Mucosa of descending colon (tissue), 3 donors: ENCODE measurements at regions of chr13 and their contacts with region 1.

Region 1: DNA sequence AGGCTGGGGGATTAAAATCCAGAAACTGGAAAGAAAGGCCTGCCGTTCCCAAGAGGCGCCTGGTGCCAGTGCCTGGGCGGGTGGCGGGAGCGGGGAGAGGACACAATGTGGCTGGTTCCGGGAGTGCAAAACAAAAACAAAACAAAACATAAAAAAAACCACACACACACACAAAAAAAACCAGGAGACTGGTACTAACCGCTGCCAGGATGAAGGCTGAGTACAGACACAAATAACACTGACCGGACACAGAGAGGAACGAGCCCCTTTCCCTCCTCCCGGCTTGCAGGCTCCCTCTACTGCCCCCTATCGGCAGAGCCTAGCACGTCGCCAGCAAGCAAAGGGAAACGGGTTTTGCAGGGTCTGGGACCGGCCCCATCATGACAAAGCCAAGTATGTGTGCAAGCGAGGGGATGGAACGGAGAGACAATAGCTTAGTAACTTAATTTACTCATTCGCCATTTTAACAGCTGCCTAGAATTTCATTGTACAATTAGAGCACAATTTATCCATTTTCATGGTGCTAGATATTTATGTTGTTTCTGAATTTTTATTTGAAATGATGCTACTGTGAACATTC is 17.9 kb upstream of the ZDHHC20 start:
- DNase-seq: peak; percentile 74 to 91 (median 87)
- ATAC-seq: peak; percentile 96
- H3K4me3 ChIP-seq: no peak overlapping the region
- H3K4me1 ChIP-seq: peaks cover 5% of the 10 kb centered on the region
- CTCF ChIP-seq: peak; percentile 96

Region 2: DNA sequence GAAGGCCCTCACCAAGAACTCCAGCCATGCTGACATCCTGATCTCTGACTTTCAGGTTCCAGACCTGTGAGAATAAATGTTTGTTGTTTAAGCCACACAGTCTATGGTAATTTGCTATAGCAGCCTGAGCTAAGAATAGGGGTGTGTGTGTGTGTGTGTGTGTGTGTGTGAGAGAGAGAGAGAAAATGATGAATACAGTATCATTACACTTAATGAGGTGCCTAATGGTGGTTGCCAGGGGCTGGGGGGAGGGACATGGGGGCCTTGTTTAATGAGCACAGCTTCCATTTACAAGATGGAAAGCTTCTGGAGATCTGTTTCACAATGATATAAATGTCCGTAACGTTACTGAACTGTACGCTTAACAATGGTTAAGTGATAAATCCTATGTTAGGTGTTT is 361.8 kb before region 1 on chr13:
- intact Hi-C with region 1: loop called in 1 of 2 experiments (anchors 10 kb)
- DNase-seq: no peak
- ATAC-seq: no peak
- H3K4me3 ChIP-seq: no peak overlapping the region
- H3K4me1 ChIP-seq: no peaks in the 10 kb centered on the region
- CTCF ChIP-seq: no peak

Region 3: GRCh38 chr13:21297914-21298831 is 178.8 kb before region 1 on chr13:
- intact Hi-C with region 1: loop called (anchors 2 to 10 kb)
- DNase-seq: peak; percentile 89 to 92 (median 92)
- ATAC-seq: peak; percentile 99
- H3K4me3 ChIP-seq: peak overlapping the region; percentile 81
- H3K4me1 ChIP-seq: peaks cover 10% of the 10 kb centered on the region
- CTCF ChIP-seq: peak; percentile 83